GM10248 (cell line): ENCODE measurements at regions of chr12 and their contacts with region 1.

Region 1: GRCh38 chr12:118055144-118055557 is 5.8 kb downstream of the WSB2 start:
- DNase-seq: peak; percentile 49
- CTCF ChIP-seq: peak; percentile 68

Region 2: GRCh38 chr12:118035246-118036041 is 19.7 kb before region 1 on chr12:
- CTCF ChIA-PET with region 1: interaction called, 13 read pairs
- POLR2A ChIA-PET with region 1: no interaction called
- DNase-seq: peak; percentile 67
- CTCF ChIP-seq: no peak

Region 3: GRCh38 chr12:118044075-118044474 is 11.1 kb before region 1 on chr12:
- CTCF ChIA-PET with region 1: interaction called, 42 read pairs
- POLR2A ChIA-PET with region 1: no interaction called
- DNase-seq: no peak
- CTCF ChIP-seq: no peak